Tibial artery (tissue), 4 donors: ENCODE measurements at regions of chr17 and their contacts with region 1.

Region 1: GRCh38 chr17:28041068-28041843 is 1.2 kb upstream of the NLK start:
- DNase-seq: peak; percentile 99 to 100
- H3K4me3 ChIP-seq: peak overlapping the region; percentile 97 to 98
- H3K27ac ChIP-seq: peak overlapping the region; percentile 89 to 97
- H3K4me1 ChIP-seq: peaks cover 0 to 42% (median 24%) of the 10 kb centered on the region in 4 donors
- H3K27me3 ChIP-seq: no peaks in the 10 kb centered on the region
- CTCF ChIP-seq: peak in 1 of 2 experiments; percentile 30

Region 2: GRCh38 chr17:27892866-27893769 is 148.1 kb before region 1 on chr17 and contains the start of gene LYRM9:
- intact Hi-C with region 1: loop called (anchors 2 kb)
- DNase-seq: peak; percentile 88 to 94
- H3K4me3 ChIP-seq: peak within 1 kb of the TSS; percentile 85 to 87
- H3K27ac ChIP-seq: peak within 1 kb of the TSS; percentile 88 to 89
- H3K4me1 ChIP-seq: peaks cover 0 to 27% (median 3%) of the 10 kb centered on the region in 4 donors
- H3K27me3 ChIP-seq: peaks cover 0 to 3% of the 10 kb centered on the region in 2 donors
- CTCF ChIP-seq: peak; percentile 89 to 96

Region 3: DNA sequence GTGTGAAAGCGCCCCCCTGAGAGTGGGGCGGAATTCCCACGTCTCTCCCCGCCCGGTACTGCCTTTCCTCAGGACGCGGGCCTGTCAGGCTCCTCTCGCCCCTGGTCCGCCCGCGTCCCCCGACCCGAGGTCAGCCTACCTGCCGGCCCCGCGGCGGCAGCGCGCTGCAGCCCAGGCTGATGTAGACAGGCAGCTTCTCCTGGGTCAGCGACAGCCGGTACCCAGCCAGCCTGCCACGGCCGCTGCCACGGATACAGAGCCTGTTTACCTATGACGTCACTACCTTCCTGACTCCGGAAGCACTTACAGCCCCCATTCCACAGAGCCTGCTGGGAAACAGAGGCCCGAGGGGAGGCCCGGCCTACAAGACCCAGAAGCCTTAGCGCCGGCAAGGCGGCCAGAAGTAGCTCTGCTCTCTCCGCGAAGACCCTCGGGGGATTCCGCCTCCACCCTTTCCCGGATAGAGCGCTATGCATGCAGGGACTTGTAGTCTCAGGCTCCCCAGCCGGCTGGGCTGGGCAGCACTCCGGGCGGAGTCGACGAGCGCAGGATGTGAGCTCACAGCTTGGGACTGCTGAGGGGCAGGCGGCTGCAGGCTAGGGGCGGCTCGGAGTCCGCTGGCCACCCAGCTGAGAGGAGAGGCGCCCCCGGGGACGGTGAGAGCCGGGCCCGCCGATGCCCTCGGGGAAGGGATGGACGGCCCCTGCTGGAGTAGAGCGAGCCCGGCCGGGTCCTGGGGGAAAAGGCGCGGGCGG is 294.1 kb after region 1 on chr17 and contains the starts of genes IFT20 and TNFAIP1:
- intact Hi-C with region 1: loop called (anchors 10 kb)
- DNase-seq: peak; percentile 99 to 100
- H3K4me3 ChIP-seq: peak within 1 kb of the TSS; percentile 68 to 89
- H3K27ac ChIP-seq: peak within 1 kb of the TSS; percentile 92 to 94
- H3K4me1 ChIP-seq: peaks cover 0 to 48% (median 41%) of the 10 kb centered on the region in 4 donors
- H3K27me3 ChIP-seq: no peaks in the 10 kb centered on the region
- CTCF ChIP-seq: peak in 1 of 2 experiments; percentile 8

Region 4: DNA sequence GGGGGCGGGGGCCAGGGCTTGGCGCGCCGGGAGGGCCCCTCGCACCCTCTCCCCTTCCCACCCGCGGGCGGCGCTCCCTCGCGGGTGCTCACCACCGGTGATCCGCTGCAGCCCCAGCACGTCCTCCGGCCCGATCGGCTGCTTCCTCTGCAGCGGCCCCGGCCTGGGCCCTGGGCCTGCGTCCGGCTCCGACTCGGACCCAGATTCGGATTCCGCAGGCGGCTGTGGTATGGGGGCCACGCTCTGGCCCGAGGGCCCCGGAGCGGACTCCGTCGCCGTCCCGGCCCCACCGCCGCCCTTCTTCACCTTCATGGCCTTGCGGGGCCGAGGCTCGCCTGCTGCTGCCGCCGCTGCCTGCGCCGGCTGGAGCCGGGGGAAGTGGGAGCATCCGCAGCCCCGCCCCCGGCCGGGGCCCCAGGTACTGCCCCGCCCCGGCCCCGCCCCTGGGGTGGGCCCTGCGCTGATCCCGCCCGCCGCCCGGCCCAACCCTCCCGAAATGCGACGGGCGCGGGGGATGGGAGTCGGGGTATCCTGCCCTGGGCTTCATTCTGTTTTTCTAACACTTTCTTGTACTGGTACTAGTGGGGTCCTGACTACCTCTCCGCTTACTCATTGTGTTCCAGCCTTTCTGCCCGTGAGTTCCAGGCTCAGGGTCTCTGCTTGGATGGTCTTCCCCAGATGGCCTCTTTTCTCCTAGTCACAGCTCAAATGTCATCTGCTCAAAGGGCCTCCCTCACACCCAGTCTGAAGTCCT is 511.2 kb after region 1 on chr17 and contains the start of gene UNC119:
- intact Hi-C with region 1: loop called (anchors 10 kb)
- DNase-seq: peak; percentile 59 to 84
- H3K4me3 ChIP-seq: peak within 1 kb of the TSS; percentile 79 to 87
- H3K27ac ChIP-seq: peak within 1 kb of the TSS; percentile 74 to 75
- H3K4me1 ChIP-seq: peaks cover 0 to 21% (median 12%) of the 10 kb centered on the region in 4 donors
- H3K27me3 ChIP-seq: no peaks in the 10 kb centered on the region
- CTCF ChIP-seq: no peak